PC-9 (cell line): ENCODE measurements at regions of chr2 and their contacts with region 1.

Region 1: GRCh38 chr2:85797921-85798320 is 44.1 kb downstream of the ATOH8 start:
- DNase-seq: no peak
- H3K4me3 ChIP-seq: no peak overlapping the region
- H3K27ac ChIP-seq: no peak overlapping the region
- H3K4me1 ChIP-seq: peaks cover 10% of the 10 kb centered on the region
- H3K27me3 ChIP-seq: no peaks in the 10 kb centered on the region
- CTCF ChIP-seq: no peak; the same call in 1 of the 2 replicates

Region 2: DNA sequence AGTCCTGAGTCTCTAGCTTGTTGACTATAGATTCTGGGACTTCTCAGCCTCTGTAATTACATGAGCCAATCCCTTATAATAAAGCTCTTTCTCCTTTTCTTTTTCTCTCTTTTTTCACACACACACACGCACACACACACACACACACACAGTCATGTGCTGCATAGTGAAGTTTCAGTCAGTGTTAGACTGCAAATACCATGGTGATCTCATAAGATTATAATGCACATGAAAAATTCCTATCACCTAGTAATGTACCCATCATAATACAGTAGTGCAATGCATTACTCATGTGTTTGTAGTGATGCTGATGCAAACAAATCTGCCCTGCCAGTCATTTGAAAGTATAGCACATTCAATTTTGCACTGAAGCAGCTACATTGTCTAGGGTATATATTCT is 1897.1 kb before region 1 on chr2:
- CTCF ChIA-PET with region 1: no interaction called
- POLR2A ChIA-PET with region 1: no interaction called
- intact Hi-C with region 1: no loop called
- DNase-seq: no peak
- H3K4me3 ChIP-seq: no peak overlapping the region
- H3K27ac ChIP-seq: no peak overlapping the region
- H3K4me1 ChIP-seq: no peaks in the 10 kb centered on the region
- H3K27me3 ChIP-seq: no peaks in the 10 kb centered on the region
- CTCF ChIP-seq: no peak

Region 3: GRCh38 chr2:85577386-85578242 is 220.3 kb before region 1 on chr2 and contains the start of gene VAMP8:
- CTCF ChIA-PET with region 1: interaction called, 13 read pairs
- POLR2A ChIA-PET with region 1: no interaction called
- intact Hi-C with region 1: no loop called
- DNase-seq: peak; percentile 79 to 83
- H3K4me3 ChIP-seq: peak within 1 kb of the TSS; percentile 60
- H3K27ac ChIP-seq: peak within 1 kb of the TSS; percentile 64
- H3K4me1 ChIP-seq: peaks cover 22% of the 10 kb centered on the region
- H3K27me3 ChIP-seq: no peaks in the 10 kb centered on the region
- CTCF ChIP-seq: no peak
- total RNA-seq, gene VAMP8: 91.9 and 124 TPM in 2 replicates

Region 4: GRCh38 chr2:85750587-85751575 is 47.0 kb before region 1 on chr2:
- CTCF ChIA-PET with region 1: interaction called, 5 read pairs
- POLR2A ChIA-PET with region 1: no interaction called
- intact Hi-C with region 1: loop called (anchors 2 kb)
- DNase-seq: peak in 1 of 2 experiments; percentile 66
- H3K4me3 ChIP-seq: no peak overlapping the region
- H3K27ac ChIP-seq: no peak overlapping the region
- H3K4me1 ChIP-seq: no peaks in the 10 kb centered on the region
- H3K27me3 ChIP-seq: peaks cover 81% of the 10 kb centered on the region
- CTCF ChIP-seq: peak; percentile 83